ENCODE measurements at regions of chr5 and their contacts with region 1.

Region 1: DNA sequence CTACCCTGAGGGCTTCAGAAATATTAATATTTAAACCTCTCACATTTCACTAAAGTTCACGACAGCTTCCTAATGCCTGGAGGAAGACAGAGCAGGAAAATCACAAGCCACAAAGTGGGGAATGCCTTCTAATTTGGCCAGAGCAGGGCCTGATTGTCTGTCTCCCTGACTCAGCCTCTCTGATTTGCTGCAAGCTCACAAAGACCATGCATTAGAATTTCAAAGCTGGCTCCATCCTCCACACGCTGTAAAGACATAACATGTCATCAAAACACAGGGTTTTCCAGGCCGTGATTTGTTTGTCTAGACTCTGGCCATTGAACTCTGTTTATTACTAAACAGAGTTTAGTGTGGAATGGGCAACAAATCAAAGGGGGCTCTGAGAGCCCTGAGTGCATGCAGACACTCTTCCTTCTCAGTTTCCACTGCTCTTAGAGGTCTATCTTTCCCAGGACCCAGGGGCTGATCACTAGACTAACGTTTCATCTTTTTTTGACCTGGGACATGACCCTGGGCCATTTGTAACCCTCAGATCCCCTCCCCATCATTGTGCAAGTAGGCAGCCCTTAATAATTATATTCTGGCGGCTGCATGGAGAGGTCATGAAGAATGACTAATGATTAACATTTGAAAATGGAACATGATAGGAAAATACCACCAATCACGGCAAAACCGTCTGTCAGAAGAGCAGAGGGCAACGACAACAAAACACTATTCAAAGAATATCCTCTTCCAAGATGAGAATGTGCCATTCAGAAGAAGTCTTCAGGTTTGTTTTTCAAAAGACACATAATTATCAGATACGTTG is 140.2 kb downstream of the ENC1 start:
- DNase-seq: no peak
- ATAC-seq: no peak
- H3K4me3 ChIP-seq: no peak overlapping the region
- H3K27ac ChIP-seq: no peak overlapping the region
- H3K4me1 ChIP-seq: peaks cover 20% of the 10 kb centered on the region
- H3K27me3 ChIP-seq: no peaks in the 10 kb centered on the region
- CTCF ChIP-seq: no peak

Region 2: DNA sequence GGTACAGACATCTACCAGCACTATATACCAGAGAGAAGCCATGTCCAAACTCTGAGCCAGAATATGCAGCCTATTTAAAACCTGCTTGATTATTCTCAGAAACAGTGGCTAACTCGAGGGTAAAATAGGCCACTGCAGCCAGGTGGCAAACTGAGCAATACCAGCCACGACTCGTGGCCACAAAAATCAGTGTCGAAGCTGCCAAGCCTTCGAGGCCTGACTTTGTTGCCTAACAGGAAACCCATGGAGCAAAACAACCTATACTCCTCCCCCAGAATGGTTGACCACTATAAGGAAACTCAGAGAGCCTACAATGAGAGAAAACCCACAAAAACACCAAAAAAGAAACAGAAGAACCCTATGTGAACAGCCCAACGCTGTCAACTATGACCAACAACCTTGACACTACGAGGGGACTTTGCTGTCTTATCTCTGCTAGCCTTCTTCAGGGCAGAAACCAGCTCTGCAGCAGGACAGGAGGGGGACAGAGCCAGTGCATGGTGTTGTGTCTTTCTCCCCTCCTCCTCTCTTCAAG is 1193.5 kb before region 1 on chr5:
- CTCF ChIA-PET with region 1: no interaction called
- POLR2A ChIA-PET with region 1: interaction called, 11 read pairs
- in situ Hi-C with region 1: no loop called
- intact Hi-C with region 1: no loop called
- DNase-seq: no peak
- ATAC-seq: no peak
- H3K4me3 ChIP-seq: no peak overlapping the region
- H3K27ac ChIP-seq: no peak overlapping the region
- H3K4me1 ChIP-seq: peaks cover 9% of the 10 kb centered on the region
- H3K27me3 ChIP-seq: no peaks in the 10 kb centered on the region
- CTCF ChIP-seq: no peak

Region 3: DNA sequence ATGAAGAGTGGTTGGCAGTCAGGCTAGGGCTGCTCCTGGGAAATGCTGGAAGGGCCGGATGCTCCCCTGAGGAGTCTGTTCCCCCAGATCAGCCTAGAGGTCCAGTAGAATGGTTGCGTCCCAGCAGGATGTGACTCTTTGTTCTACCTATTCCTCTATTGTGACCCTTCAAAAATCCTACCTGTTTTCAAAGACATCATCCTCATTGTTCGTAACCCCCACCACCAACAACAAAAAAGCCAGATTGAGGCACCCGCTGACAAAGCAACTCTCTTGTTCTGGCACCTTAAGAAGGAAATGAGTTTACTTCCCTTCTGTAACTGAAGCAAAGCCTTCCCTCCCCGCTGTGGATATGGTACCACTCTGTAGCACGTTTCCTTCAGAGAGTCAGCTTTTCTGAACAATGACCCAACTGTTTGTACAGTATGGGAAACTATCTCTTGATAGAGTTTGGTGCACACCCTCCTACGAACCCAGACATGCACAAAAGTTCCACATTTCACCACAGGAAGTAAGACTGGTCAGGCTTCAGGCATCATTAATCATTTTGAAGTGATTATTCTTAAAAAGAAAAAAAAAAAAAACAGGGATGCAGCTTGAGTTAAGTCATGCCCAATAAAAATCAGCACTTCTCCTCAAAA is 66.9 kb before region 1 on chr5:
- CTCF ChIA-PET with region 1: no interaction called
- POLR2A ChIA-PET with region 1: no interaction called
- in situ Hi-C with region 1: no loop called
- intact Hi-C with region 1: no loop called
- DNase-seq: no peak
- ATAC-seq: no peak
- H3K4me3 ChIP-seq: no peak overlapping the region
- H3K27ac ChIP-seq: no peak overlapping the region
- H3K4me1 ChIP-seq: no peaks in the 10 kb centered on the region
- H3K27me3 ChIP-seq: no peaks in the 10 kb centered on the region
- CTCF ChIP-seq: no peak